Mammary epithelial cell (primary cell): ENCODE measurements at regions of chr1 and their contacts with region 1.

Region 1: GRCh38 chr1:17606826-17607440 is 67.4 kb downstream of the ARHGEF10L start:
- DNase-seq: peak; percentile 42
- H3K4me3 ChIP-seq: no peak overlapping the region
- H3K27ac ChIP-seq: no peak overlapping the region
- H3K4me1 ChIP-seq: no peaks in the 10 kb centered on the region
- H3K27me3 ChIP-seq: peaks cover 2% of the 10 kb centered on the region
- CTCF ChIP-seq: peak; percentile 90 to 98

Region 2: GRCh38 chr1:17439250-17440073 is 167.5 kb before region 1 on chr1 and contains the start of gene RCC2:
- CTCF ChIA-PET with region 1: interaction called, 20 read pairs
- dilution Hi-C with region 1: no loop called
- in situ Hi-C with region 1: no loop called
- intact Hi-C with region 1: no loop called
- DNase-seq: peak; percentile 72
- H3K4me3 ChIP-seq: peak within 1 kb of the TSS; percentile 76 to 99 (median 86)
- H3K27ac ChIP-seq: peak within 1 kb of the TSS; percentile 95
- H3K4me1 ChIP-seq: peaks cover 56% of the 10 kb centered on the region
- H3K27me3 ChIP-seq: no peaks in the 10 kb centered on the region
- CTCF ChIP-seq: no peak
- total RNA-seq, gene RCC2: 97.9 to 113 TPM

Region 3: GRCh38 chr1:17520071-17520813 is 86.7 kb before region 1 on chr1:
- CTCF ChIA-PET with region 1: no interaction called
- dilution Hi-C with region 1: loop called (anchors 5 kb)
- in situ Hi-C with region 1: no loop called
- intact Hi-C with region 1: no loop called
- DNase-seq: peak; percentile 90
- H3K4me3 ChIP-seq: no peak overlapping the region
- H3K27ac ChIP-seq: no peak overlapping the region
- H3K4me1 ChIP-seq: peaks cover 12% of the 10 kb centered on the region
- H3K27me3 ChIP-seq: no peaks in the 10 kb centered on the region
- CTCF ChIP-seq: no peak

Region 4: DNA sequence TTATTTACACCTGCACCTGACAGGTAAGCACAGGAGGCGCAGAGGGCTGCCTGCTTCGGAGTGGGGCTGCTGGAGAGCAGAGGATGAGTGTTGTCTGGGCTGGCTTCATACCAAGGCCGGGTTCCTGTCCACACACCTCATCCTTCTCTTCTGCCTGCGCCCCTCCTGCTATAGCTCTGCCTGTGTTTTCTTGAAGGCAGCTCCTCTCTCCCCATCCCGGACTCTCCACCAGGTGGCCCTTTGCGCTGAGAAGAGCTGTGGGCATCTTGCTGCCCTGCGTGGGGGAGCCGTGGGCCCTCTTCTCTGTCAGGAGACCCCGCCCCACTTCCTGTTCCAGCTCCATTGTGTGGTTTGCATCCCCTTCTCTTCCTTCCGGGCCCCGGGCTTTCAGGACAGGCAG is 32.4 kb before region 1 on chr1:
- CTCF ChIA-PET with region 1: interaction called, 6 read pairs
- dilution Hi-C with region 1: no loop called
- in situ Hi-C with region 1: no loop called
- intact Hi-C with region 1: loop called (anchors 2 kb)
- DNase-seq: no peak
- H3K4me3 ChIP-seq: no peak overlapping the region
- H3K27ac ChIP-seq: no peak overlapping the region
- H3K4me1 ChIP-seq: peaks cover 7% of the 10 kb centered on the region
- H3K27me3 ChIP-seq: no peaks in the 10 kb centered on the region
- CTCF ChIP-seq: peak; percentile 23 to 38

Region 5: GRCh38 chr1:17682399-17682798 is 75.5 kb after region 1 on chr1:
- CTCF ChIA-PET with region 1: no interaction called
- dilution Hi-C with region 1: no loop called
- in situ Hi-C with region 1: no loop called
- intact Hi-C with region 1: no loop called
- DNase-seq: peak; percentile 31
- H3K4me3 ChIP-seq: no peak overlapping the region
- H3K27ac ChIP-seq: no peak overlapping the region
- H3K4me1 ChIP-seq: no peaks in the 10 kb centered on the region
- H3K27me3 ChIP-seq: no peaks in the 10 kb centered on the region
- CTCF ChIP-seq: no peak